Naive thymus-derived CD4-positive, alpha-beta T cell (primary cell): ENCODE measurements at regions of chrX and their contacts with region 1.

Region 1: DNA sequence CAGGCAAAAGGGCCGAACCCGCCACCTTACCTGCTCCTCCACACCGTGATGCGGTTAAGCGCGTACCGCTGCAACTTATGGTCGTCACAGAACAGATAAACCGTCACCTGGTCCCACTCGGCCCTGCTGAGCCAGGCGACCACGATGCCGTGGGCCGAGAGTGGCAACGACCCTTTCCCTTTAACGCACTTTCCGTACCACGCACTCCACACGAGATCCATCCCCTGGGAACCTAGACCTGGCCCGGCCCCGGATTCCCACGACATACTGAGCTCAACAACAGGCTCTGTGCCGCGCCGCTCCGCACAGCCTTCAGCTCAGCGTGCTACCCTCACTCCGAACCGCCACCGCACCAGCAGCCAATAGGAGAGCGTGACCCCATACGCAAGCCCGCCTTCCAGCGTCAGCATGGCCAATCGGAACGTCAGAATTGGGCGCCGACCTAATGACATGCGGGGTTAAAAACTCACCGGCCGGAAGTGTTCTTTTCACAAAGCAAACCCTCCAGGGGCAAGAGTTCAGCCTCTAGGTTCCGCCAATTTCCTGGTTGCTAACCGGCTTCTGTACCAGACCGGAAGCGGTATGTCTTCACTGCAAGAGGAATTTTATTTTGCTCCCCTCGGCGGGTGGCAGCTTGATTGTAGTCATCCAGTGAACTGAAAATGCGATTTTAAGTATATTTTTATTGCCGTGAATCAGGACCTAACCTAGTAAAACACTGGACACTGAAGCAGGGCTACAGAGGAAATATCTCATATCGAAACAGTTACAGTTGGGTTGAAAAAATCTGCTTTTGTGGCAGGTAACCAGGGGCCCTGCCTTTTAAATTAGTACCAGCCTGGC is at the start of gene LAS1L:
- DNase-seq: peak; percentile 71 to 94 (median 90)
- ATAC-seq: peak; percentile 99
- H3K4me3 ChIP-seq: peak within 1 kb of the TSS; percentile 96
- H3K4me3 Mint-ChIP-seq: peak within 1 kb of the TSS; percentile 97 to 100 (median 100)
- H3K27ac ChIP-seq: peak within 1 kb of the TSS; percentile 75
- H3K27ac Mint-ChIP-seq: peak within 1 kb of the TSS; percentile 94 to 100 (median 98)
- H3K4me1 ChIP-seq: peaks cover 10 to 13% of the 10 kb centered on the region in 2 donors
- H3K4me1 Mint-ChIP-seq: peaks cover 5 to 28% (median 16%) of the 10 kb centered on the region in 7 donors
- H3K27me3 ChIP-seq: no peaks in the 10 kb centered on the region
- H3K27me3 Mint-ChIP-seq: no peaks in the 10 kb centered on the region
- total RNA-seq, gene LAS1L: 37.2 to 48.9 (median 44.9) TPM

Region 2: GRCh38 chrX:64205735-64206491 is 1328.8 kb before region 1 on chrX:
- CTCF ChIA-PET with region 1: no interaction called
- POLR2A ChIA-PET with region 1: interaction called, 4 read pairs
- intact Hi-C with region 1: loop called (anchors 1 kb)
- DNase-seq: peak; percentile 70 to 88 (median 86)
- ATAC-seq: peak; percentile 95
- H3K4me3 ChIP-seq: peak overlapping the region; percentile 71
- H3K4me3 Mint-ChIP-seq: peak overlapping the region; percentile 83 to 94 (median 90)
- H3K27ac ChIP-seq: peak overlapping the region; percentile 77
- H3K27ac Mint-ChIP-seq: peak overlapping the region; percentile 82 to 95 (median 93)
- H3K4me1 ChIP-seq: peaks cover 6 to 7% of the 10 kb centered on the region in 2 donors
- H3K4me1 Mint-ChIP-seq: peaks cover 9 to 25% (median 13%) of the 10 kb centered on the region in 7 donors
- H3K27me3 ChIP-seq: no peaks in the 10 kb centered on the region
- H3K27me3 Mint-ChIP-seq: no peaks in the 10 kb centered on the region

Region 3: GRCh38 chrX:65502618-65503017 is 32.1 kb before region 1 on chrX:
- CTCF ChIA-PET with region 1: no interaction called
- POLR2A ChIA-PET with region 1: no interaction called
- intact Hi-C with region 1: no loop called
- DNase-seq: no peak
- ATAC-seq: no peak
- H3K4me3 ChIP-seq: no peak overlapping the region
- H3K4me3 Mint-ChIP-seq: no peak overlapping the region
- H3K27ac ChIP-seq: no peak overlapping the region
- H3K27ac Mint-ChIP-seq: no peak overlapping the region
- H3K4me1 ChIP-seq: no peaks in the 10 kb centered on the region
- H3K4me1 Mint-ChIP-seq: no peaks in the 10 kb centered on the region
- H3K27me3 ChIP-seq: no peaks in the 10 kb centered on the region
- H3K27me3 Mint-ChIP-seq: no peaks in the 10 kb centered on the region